ENCODE measurements at regions of chr7 and their contacts with region 1.

Region 1: DNA sequence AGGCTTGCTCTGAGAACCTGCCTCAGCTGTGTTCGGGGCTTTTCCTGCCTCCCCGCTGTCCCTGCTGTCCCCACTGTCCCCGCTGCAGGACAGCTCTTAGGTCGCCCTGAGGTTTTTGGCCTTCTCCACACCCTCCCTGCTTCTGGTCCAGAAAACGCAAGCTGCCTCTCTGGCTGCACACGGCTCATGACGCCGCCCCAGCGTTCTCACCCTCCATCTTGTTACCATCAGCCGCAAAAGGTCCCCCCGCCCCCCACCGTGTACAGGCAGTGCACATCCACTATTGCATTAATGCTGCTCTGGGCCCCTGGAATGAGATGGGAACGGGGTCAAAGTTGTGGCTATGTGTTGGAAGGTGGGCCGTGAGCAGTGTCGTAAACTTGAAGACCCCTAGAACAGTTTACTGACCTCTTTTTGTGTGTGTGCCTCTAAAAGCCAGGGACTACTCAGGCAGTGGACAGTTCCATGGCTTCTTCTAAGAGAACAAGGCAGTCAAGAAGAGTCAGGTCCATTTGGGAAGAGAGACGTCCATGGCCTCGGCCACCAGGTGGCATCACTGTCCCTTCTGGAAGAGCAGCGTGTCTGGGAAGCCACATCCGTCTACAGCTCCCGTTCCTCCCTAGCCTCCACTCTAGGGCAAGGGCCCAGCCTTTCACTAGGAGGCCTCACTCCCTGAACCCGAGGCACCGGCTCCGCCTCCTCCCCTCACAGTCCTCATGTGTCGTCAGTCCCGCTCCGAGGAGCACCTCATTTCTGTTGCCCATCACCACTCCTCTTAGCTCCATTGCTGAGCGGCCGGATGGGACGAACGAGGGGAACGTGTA is 38.5 kb upstream of the MKRN1 start:
- DNase-seq: peak; percentile 76
- ATAC-seq: peak; percentile 67
- H3K4me3 ChIP-seq: no peak overlapping the region
- H3K4me3 Mint-ChIP-seq: peak overlapping the region; percentile 62
- H3K27ac ChIP-seq: no peak overlapping the region
- H3K27ac Mint-ChIP-seq: no peak overlapping the region
- H3K4me1 ChIP-seq: peaks cover 0 to 5% of the 10 kb centered on the region in 2 donors
- H3K4me1 Mint-ChIP-seq: peaks cover 4% of the 10 kb centered on the region
- H3K27me3 ChIP-seq: peaks cover 0 to 3% (median 0%) of the 10 kb centered on the region in 4 experiments
- H3K27me3 Mint-ChIP-seq: peaks cover 21% of the 10 kb centered on the region
- CTCF ChIP-seq: peak; percentile 75

Region 2: GRCh38 chr7:140653319-140654108 is 135.8 kb after region 1 on chr7:
- CTCF ChIA-PET with region 1: interaction called, 70 read pairs
- POLR2A ChIA-PET with region 1: no interaction called
- intact Hi-C with region 1: loop called (anchors 1 kb)
- DNase-seq: peak; percentile 72
- ATAC-seq: peak; percentile 46
- H3K4me3 ChIP-seq: no peak overlapping the region
- H3K4me3 Mint-ChIP-seq: peak overlapping the region; percentile 42
- H3K27ac ChIP-seq: no peak overlapping the region
- H3K27ac Mint-ChIP-seq: peak overlapping the region; percentile 8
- H3K4me1 ChIP-seq: peaks cover 15 to 19% of the 10 kb centered on the region in 2 donors
- H3K4me1 Mint-ChIP-seq: peaks cover 22% of the 10 kb centered on the region
- H3K27me3 ChIP-seq: no peaks in the 10 kb centered on the region
- H3K27me3 Mint-ChIP-seq: peaks cover 2% of the 10 kb centered on the region
- CTCF ChIP-seq: peak; percentile 91